ENCODE measurements at regions of chr10 and their contacts with region 1.

Region 1: GRCh38 chr10:5293691-5294550 is 70.8 kb upstream of the UCN3 start:
- DNase-seq: peak; percentile 66
- H3K4me3 Mint-ChIP-seq: peak overlapping the region; percentile 89
- H3K27ac Mint-ChIP-seq: peak overlapping the region; percentile 92
- H3K4me1 Mint-ChIP-seq: peaks cover 69% of the 10 kb centered on the region
- H3K27me3 Mint-ChIP-seq: no peaks in the 10 kb centered on the region

Region 2: GRCh38 chr10:4902571-4903011 is 391.3 kb before region 1 on chr10:
- intact Hi-C with region 1: loop called (anchors 2 kb)
- DNase-seq: no peak
- H3K4me3 Mint-ChIP-seq: no peak overlapping the region
- H3K27ac Mint-ChIP-seq: peak overlapping the region; percentile 71
- H3K4me1 Mint-ChIP-seq: peaks cover 12% of the 10 kb centered on the region
- H3K27me3 Mint-ChIP-seq: no peaks in the 10 kb centered on the region

Region 3: GRCh38 chr10:5216801-5217200 is 77.1 kb before region 1 on chr10:
- intact Hi-C with region 1: no loop called
- DNase-seq: no peak
- H3K4me3 Mint-ChIP-seq: no peak overlapping the region
- H3K27ac Mint-ChIP-seq: no peak overlapping the region
- H3K4me1 Mint-ChIP-seq: no peaks in the 10 kb centered on the region
- H3K27me3 Mint-ChIP-seq: no peaks in the 10 kb centered on the region

Region 4: DNA sequence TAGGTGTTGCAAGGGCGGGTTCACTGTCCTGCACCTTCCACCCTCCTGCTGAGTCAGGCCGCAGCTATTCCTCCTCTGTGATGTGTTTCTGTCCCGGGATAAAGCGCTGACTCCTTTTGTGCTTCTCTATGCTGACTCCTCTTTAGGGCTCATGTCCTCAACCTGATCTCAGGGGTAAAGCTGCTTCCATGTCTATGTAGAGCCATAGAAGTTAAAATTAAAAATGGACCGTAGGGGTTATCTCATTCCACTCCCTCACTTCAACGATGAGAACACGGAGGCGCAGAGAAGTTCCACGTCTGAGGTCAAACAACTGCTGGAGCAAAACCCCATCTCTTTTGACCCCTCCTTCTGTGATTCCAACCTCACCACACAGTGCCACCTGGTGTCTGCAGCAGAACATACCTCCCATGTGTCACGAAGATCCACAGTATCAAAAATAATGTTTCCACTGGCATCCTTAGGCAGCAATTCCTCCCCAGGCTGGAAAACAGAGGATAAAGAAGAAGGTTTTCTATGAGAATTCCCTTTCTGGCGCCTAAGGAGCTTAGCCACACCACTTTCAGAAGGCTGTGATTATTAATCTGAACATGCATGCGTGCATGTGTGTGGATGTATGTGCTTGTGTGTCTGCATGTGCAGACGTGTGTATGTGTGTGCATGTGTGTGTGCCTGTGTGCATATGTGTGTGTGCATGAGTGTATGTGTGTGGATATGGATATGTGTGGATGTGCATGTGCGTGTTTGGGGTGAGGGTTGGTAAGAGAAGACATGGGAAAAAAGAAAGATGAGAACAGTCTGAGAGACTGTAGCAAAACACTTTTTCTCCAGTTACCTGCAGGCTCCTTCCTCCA is 10.4 kb before region 1 on chr10:
- intact Hi-C with region 1: loop called (anchors 2 kb)
- DNase-seq: peak; percentile 50
- H3K4me3 Mint-ChIP-seq: no peak overlapping the region
- H3K27ac Mint-ChIP-seq: no peak overlapping the region
- H3K4me1 Mint-ChIP-seq: peaks cover 30% of the 10 kb centered on the region
- H3K27me3 Mint-ChIP-seq: no peaks in the 10 kb centered on the region

Region 5: GRCh38 chr10:5311617-5312016 is 17.7 kb after region 1 on chr10:
- intact Hi-C with region 1: no loop called
- DNase-seq: no peak
- H3K4me3 Mint-ChIP-seq: no peak overlapping the region
- H3K27ac Mint-ChIP-seq: no peak overlapping the region
- H3K4me1 Mint-ChIP-seq: peaks cover 16% of the 10 kb centered on the region
- H3K27me3 Mint-ChIP-seq: no peaks in the 10 kb centered on the region

Region 6: DNA sequence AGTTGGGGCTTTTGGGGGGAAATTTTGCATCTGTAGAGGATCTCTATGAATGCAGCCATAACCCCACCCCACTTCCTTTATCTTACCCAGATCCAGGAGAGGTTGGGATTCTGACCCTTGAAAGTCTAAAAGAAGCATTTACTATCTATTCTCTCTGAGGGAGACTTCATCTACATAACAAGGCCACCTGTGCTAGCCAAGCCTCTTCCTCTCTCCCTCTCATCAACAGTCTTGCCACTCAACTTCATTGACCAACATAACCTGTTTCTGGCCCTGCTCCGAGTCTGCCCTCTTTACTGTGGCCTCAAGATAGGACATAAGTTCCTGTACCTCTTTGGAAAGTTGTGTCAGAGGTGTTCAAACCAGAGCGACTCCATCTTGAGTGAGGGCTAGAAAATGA is 91.3 kb after region 1 on chr10:
- intact Hi-C with region 1: loop called (anchors 10 kb)
- DNase-seq: no peak
- H3K4me3 Mint-ChIP-seq: no peak overlapping the region
- H3K27ac Mint-ChIP-seq: no peak overlapping the region
- H3K4me1 Mint-ChIP-seq: no peaks in the 10 kb centered on the region
- H3K27me3 Mint-ChIP-seq: peaks cover 3% of the 10 kb centered on the region

Region 7: DNA sequence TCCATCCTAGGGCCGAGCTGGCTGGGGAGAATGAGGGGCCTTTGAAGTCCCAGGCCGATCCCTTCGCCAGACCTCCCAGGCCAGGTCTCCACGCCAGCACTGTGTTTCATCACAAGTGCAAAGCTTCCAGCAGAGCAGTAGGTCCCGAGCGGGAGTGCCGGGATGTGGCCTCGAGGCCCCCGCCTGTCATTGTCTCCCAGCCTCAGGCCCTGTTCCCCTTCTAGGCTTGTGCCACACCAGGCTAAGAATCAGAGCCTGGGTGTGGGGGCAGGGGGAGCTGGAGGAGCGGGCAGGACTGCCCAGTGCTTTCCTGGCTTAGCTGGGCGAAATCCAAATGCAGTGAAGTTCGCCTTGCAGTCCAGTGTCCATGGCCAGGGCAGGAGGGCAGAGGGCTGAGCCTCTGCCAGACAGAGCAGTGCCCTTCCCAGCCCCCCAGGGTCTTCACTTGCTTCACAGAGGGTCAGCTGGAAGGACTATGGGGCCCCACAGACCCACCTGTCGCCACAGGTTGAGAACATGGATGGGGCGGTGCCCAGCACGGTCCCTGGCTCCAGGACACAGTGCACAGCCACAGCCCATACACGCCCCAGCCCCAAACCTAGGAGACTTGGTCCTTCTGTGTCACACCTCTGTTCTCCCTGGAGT is 888.7 kb after region 1 on chr10:
- intact Hi-C with region 1: no loop called
- DNase-seq: no peak
- H3K4me3 Mint-ChIP-seq: no peak overlapping the region
- H3K27ac Mint-ChIP-seq: no peak overlapping the region
- H3K4me1 Mint-ChIP-seq: peaks cover 22% of the 10 kb centered on the region
- H3K27me3 Mint-ChIP-seq: no peaks in the 10 kb centered on the region

Region 8: GRCh38 chr10:6275022-6275997 is 981.4 kb after region 1 on chr10:
- intact Hi-C with region 1: loop called (anchors 10 kb)
- DNase-seq: peak; percentile 79
- H3K4me3 Mint-ChIP-seq: peak overlapping the region; percentile 76
- H3K27ac Mint-ChIP-seq: peak overlapping the region; percentile 97
- H3K4me1 Mint-ChIP-seq: peaks cover 54% of the 10 kb centered on the region
- H3K27me3 Mint-ChIP-seq: no peaks in the 10 kb centered on the region

Measured in activated T-helper 2 cell treated with anti-CD3 and anti-CD28 coated beads, Interferon-gamma antibody, Interleukin-2, Interleukin-4, amounts not matched to agents 10 μg/mL and 5 μg/mL and 100 μg/mL, durations not matched to agents 14 hours and 24 hours and 36 hours (primary cell).